Right ventricle myocardium superior (tissue), 1 donor: ENCODE measurements at regions of chr3 and their contacts with region 1.

Region 1: GRCh38 chr3:146218880-146219866 is 31.7 kb downstream of the PLSCR4 start:
- DNase-seq: no peak
- ATAC-seq: no peak

Region 2: GRCh38 chr3:146117406-146118285 is 101.5 kb before region 1 on chr3:
- intact Hi-C with region 1: no loop called
- DNase-seq: no peak
- ATAC-seq: no peak

Region 3: DNA sequence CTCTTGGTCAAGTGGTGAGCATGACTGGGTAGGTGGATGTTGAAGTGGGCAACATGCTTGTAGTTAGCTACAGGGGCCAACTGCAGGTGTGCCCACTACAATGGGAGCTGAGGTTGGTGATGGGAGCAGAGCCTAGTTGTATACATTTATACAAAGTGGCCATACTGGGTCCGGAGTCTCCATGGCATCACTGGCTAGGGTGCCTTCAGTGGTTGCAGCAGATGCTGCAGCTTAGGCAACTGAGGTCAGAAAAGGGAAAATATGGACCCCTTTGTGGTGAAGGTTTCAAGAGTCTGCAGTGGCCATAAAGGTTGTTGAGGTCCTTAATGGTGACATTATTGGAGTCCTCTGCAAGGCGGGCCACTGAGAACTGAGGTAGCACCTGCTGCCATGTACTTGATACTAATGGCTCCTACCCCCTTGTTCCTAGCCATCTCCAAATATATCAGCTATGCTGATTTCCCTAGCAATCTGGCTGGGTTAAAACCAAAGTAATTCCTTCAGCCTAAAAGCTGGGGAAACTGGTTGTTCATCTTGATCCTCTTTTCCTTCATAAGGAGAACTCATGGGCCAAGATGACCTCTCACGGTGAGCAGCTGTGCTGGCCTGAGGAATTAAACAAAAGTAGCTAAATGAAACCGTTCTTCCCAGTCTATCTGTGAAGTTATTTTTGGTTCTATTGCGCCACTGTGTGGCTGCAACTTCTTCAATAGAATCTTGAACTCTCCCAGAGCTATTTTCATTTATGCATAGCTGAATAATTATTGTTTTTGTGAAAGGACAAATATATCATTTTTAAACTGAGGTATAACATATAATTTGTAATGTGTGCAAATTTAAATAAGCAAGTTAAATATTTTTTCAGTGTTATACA is 107.7 kb after region 1 on chr3:
- intact Hi-C with region 1: loop called (anchors 2 kb)
- DNase-seq: peak; percentile 45
- ATAC-seq: peak; percentile 75

Region 4: DNA sequence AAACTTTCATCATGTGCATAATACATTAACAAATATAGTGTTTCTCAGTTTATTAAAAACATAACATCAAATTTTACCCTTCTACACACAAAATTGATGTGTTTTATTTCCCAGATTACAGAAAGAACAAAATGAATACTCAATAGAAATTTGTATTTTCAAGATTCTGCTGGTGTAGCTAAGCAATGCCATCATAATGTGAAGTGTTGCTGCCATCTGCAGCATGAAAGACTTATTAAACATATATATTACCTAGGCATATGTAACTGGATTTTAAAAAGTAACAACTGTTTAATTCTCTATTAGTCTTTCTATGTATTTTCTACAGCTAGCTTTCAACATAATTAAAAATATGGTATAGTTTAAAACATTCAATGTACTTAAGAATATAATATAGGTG is 358.5 kb after region 1 on chr3:
- intact Hi-C with region 1: loop called (anchors 5 kb)
- DNase-seq: no peak
- ATAC-seq: peak; percentile 58